ENCODE measurements at regions of chr19 and their contacts with region 1.

Region 1: DNA sequence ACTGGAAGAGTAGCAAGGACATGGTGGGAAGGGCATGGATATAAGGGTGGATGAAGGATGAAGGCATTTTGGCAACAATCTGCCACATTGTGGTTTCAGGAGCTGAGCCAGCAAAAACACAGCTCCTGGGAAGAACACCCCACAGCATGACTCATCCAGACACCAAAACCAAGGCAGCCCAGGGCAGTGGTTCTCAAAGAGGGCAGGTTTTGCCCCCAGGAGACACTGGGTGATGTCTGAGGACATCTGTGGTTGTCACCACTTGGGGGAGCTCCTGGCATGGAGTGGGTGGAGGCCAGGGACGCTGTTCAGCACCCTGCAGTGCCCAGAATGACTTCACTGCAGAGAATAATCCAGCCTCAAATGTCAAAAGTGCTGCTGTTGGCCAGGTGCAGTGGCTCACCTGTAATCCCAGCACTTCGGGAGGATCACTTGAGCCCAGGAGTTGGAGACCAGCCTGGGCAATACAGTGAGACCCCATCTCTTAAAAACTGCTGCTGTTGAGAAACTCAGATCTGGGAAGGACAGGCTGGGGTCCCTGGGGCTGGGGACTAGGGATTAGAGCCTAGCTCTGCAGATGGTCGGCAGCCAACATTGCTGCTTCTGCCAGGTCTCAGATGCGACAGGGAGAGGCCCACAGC is 16.1 kb downstream of the ZFR2 start:
- DNase-seq: peak; percentile 99
- H3K4me3 Mint-ChIP-seq: no peak overlapping the region
- H3K27ac Mint-ChIP-seq: no peak overlapping the region
- H3K4me1 Mint-ChIP-seq: peaks cover 9% of the 10 kb centered on the region
- H3K27me3 Mint-ChIP-seq: peaks cover 53% of the 10 kb centered on the region
- CTCF ChIP-seq: peak; percentile 62

Region 2: GRCh38 chr19:4199699-4200293 is 347.1 kb after region 1 on chr19:
- CTCF ChIA-PET with region 1: no interaction called
- POLR2A ChIA-PET with region 1: interaction called, 3 read pairs
- intact Hi-C with region 1: loop called (anchors 5 kb)
- DNase-seq: no peak
- H3K4me3 Mint-ChIP-seq: no peak overlapping the region
- H3K27ac Mint-ChIP-seq: no peak overlapping the region
- H3K4me1 Mint-ChIP-seq: peaks cover 16% of the 10 kb centered on the region
- H3K27me3 Mint-ChIP-seq: peaks cover 53% of the 10 kb centered on the region
- CTCF ChIP-seq: no peak

Measured in MCF 10A (cell line).